A549 (cell line): ENCODE measurements at regions of chr1 and their contacts with region 1.

Region 1: GRCh38 chr1:31182352-31182751 is 57.3 kb downstream of the NKAIN1 start:
- DNase-seq: peak; percentile 42 to 82
- ATAC-seq: peak; percentile 80 to 85
- H3K4me3 ChIP-seq: peak overlapping the region; percentile 46
- H3K27ac ChIP-seq: no peak overlapping the region; a peak in 1 of 6 replicates
- H3K4me1 ChIP-seq: peaks cover 10% of the 10 kb centered on the region; the same call in 1 of the 3 replicates
- CTCF ChIP-seq: 0 out of 3 replicates have a peak, but pooled peaks have one; percentile 13
- EP300 ChIP-seq: no peak
- POLR2A ChIP-seq: no peak
- RAD21 ChIP-seq: no peak

Region 2: GRCh38 chr1:31243501-31244286 is 61.3 kb after region 1 on chr1:
- CTCF ChIA-PET with region 1: interaction called, 11 read pairs
- POLR2A ChIA-PET with region 1: no interaction called
- DNase-seq: no peak
- ATAC-seq: no peak
- H3K4me3 ChIP-seq: no peak overlapping the region
- H3K27ac ChIP-seq: no peak overlapping the region
- H3K4me1 ChIP-seq: no peaks in the 10 kb centered on the region
- CTCF ChIP-seq: no peak
- EP300 ChIP-seq: no peak
- POLR2A ChIP-seq: no peak
- RAD21 ChIP-seq: no peak

Region 3: DNA sequence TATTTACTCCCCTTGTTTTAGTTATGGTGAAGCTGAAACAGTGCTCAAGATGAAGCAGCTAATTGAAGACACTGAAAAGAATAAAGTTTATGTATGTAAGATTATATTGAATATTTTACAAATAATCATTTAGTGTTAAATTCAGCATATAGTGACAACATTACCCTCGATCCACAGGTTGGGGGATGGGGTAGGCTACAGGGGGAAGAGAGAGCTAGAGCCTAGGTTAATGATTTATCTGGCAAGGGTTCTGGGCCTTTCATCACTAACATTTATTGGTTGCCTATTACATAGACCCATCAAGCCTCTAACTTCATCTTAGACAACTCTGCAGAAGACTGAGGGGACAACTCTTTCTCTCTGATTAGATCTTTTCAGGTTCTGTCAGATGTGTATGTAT is 135.8 kb after region 1 on chr1:
- CTCF ChIA-PET with region 1: interaction called, 11 read pairs
- POLR2A ChIA-PET with region 1: no interaction called
- DNase-seq: no peak
- ATAC-seq: no peak
- H3K4me3 ChIP-seq: no peak overlapping the region
- H3K27ac ChIP-seq: no peak overlapping the region
- H3K4me1 ChIP-seq: no peaks in the 10 kb centered on the region
- CTCF ChIP-seq: no peak
- EP300 ChIP-seq: no peak
- POLR2A ChIP-seq: no peak
- RAD21 ChIP-seq: no peak

Region 4: DNA sequence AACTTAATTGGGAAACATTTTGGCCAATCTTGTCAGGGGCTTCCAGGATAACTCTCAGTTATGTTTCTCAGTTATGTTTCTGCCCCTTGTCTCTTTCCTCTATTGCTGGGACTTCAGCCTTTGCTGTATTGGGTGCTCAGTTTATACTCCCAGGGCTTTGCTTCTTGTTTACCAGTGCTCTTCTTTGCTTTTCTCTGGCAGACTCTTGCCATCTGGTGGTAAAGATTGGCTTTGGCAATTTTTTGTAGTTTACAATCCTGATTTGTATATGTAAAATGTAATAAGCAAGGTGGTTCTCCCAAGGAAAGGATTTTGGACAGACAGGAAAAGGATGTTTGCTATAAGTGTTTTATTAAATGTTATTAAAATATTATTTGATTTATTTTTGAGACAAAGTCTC is 152.7 kb after region 1 on chr1:
- CTCF ChIA-PET with region 1: interaction called, 69 read pairs
- POLR2A ChIA-PET with region 1: no interaction called
- DNase-seq: peak; percentile 7 to 45
- ATAC-seq: peak in 1 of 2 experiments; percentile 61; a peak in 3 of 6 replicates
- H3K4me3 ChIP-seq: no peak overlapping the region
- H3K27ac ChIP-seq: no peak overlapping the region
- H3K4me1 ChIP-seq: no peaks in the 10 kb centered on the region
- CTCF ChIP-seq: peak; percentile 60
- EP300 ChIP-seq: no peak
- POLR2A ChIP-seq: no peak
- RAD21 ChIP-seq: peak; percentile 61 to 62

Region 5: DNA sequence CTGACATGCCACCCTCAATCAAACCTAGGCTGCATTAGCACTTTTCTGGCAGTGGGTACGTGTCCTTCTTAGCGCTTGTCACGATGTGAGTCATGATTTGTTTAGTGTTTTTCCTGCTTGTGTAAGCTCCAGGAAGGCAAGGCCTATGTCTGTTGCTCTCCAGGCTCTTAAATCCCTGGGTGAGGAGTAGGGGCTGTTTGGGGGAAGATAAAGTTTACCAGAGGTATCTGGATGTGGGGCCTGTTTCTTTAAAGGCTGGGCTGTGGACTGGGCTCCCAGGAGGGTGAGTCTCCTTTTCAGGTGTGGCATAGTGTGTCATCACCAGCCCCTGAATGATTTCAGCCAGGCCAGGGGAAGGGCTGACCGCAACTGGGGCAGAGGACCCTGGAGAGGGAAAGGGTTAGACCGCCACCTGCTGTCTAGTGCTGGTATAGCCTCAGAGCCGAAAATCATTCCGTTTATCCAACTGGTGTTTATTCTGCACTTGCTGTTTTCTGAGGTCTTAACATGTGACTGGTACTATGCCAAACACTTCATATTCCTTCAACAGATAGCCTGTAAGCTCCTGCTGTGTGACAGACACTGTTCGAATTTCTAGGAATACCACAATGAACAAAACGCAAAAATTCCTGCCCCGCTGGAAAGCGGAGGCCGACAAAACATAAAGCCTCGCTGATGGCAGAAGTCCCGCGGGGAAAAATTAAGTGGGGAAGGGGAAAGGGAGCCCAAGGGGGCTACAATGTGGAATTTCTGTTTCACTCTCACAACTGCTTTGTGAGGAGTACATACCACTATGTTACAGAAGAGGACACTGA is 240.4 kb after region 1 on chr1:
- CTCF ChIA-PET with region 1: interaction called, 32 read pairs
- POLR2A ChIA-PET with region 1: no interaction called
- DNase-seq: peak; percentile 71 to 75
- ATAC-seq: peak; percentile 92 to 93
- H3K4me3 ChIP-seq: no peak overlapping the region
- H3K27ac ChIP-seq: peak overlapping the region; percentile 63 to 69
- H3K4me1 ChIP-seq: peaks cover 29% of the 10 kb centered on the region
- CTCF ChIP-seq: peak; percentile 68
- EP300 ChIP-seq: no peak
- POLR2A ChIP-seq: no peak
- RAD21 ChIP-seq: peak; percentile 83 to 85